ENCODE measurements at regions of chr17 and their contacts with region 1.

Region 1: GRCh38 chr17:50956750-50957523 is 90.8 kb upstream of the TOB1 start:
- DNase-seq: peak; percentile 46

Region 2: GRCh38 chr17:50783193-50783660 is 173.7 kb before region 1 on chr17:
- intact Hi-C with region 1: loop called in 1 of 2 experiments (anchors 5 kb)
- DNase-seq: peak; percentile 95

Region 3: DNA sequence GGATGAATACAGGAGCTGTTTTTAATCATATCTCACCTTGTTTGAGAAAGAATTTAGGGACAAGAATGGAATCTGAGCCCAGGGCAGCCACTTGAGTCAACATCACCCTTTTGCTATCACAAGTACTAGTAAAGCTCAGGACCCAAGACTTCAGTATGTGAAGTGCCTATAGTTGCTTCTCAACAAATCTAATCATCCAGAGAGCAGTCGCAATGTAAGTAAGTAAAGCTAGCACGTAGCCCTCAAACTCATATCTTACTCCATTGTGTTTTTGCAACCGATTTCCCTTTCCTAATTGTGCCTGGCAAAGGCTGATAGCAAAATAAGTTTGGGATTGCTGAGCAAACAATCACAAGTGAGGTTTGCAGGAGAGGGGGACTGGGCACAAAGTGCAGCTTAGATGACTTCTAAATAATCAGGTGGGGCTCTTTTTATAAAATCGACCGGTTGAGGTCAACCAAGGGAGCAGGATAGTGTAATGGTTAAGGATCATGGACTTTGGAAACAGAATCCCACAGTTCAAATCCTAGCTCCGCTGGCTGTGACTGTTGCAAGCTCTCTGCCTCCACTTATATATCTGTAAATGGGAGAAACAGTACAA is 103.8 kb before region 1 on chr17:
- intact Hi-C with region 1: loop called (anchors 5 kb)
- DNase-seq: no peak

Measured in posterior vena cava (tissue), 2 donors.